Heart left ventricle (tissue), 16 donors: ENCODE measurements at regions of chr22 and their contacts with region 1.

Region 1: GRCh38 chr22:21606775-21607174 is 23.0 kb downstream of the YDJC start:
- DNase-seq: no peak
- ATAC-seq: peak in 1 of 4 donors; percentile 8
- H3K4me3 ChIP-seq: no peak overlapping the region
- H3K27ac ChIP-seq: no peak overlapping the region
- H3K4me1 ChIP-seq: peaks cover 0 to 28% (median 4%) of the 10 kb centered on the region in 12 donors
- H3K27me3 ChIP-seq: no peaks in the 10 kb centered on the region
- CTCF ChIP-seq: no peak
- POLR2A ChIP-seq: no peak

Region 2: GRCh38 chr22:21569459-21570170 is 37.2 kb before region 1 on chr22:
- intact Hi-C with region 1: loop called in 1 of 10 experiments (anchors 5 kb)
- DNase-seq: no peak
- ATAC-seq: no peak
- H3K4me3 ChIP-seq: peak overlapping the region in 7 of 12 donors; percentile 75 to 99 (median 94)
- H3K27ac ChIP-seq: peak overlapping the region in 2 of 12 donors; percentile 59 to 94
- H3K4me1 ChIP-seq: peaks cover 4 to 65% (median 57%) of the 10 kb centered on the region in 12 donors
- H3K27me3 ChIP-seq: no peaks in the 10 kb centered on the region
- CTCF ChIP-seq: no peak
- POLR2A ChIP-seq: no peak

Region 3: DNA sequence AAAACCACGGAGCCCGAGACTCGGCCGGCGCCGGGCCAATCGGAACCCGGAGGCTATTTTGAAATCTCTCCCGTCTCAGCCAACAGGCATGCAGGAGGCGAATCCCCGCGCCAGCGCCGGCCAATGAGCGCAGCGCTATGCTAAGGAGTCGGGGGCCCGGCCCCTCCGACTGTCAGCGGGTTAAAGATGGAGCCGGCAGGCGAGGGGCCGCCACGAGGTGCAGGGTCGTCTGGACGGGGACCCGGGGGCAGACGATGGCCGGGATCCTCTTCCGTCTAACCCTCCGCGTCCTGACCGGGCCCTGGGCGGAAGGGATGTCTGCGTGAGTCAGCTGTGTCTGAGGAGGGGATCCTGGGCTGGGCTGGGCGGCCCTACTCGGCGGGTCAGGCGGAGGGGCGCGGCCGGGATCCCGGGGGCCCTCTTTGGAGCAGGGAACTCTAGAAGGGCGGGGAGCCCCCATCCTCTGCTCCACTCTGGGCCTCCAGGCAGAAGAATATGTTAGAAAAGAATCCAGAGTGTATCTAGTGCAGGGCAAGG is 45.3 kb after region 1 on chr22:
- intact Hi-C with region 1: loop called in 1 of 10 experiments (anchors 5 kb)
- DNase-seq: peak; percentile 87 to 94 (median 89)
- ATAC-seq: peak; percentile 82 to 94 (median 92)
- H3K4me3 ChIP-seq: peak overlapping the region; percentile 37 to 83 (median 60)
- H3K27ac ChIP-seq: peak overlapping the region in 3 of 12 donors; percentile 0 to 42 (median 3)
- H3K4me1 ChIP-seq: peaks cover 0 to 23% (median 18%) of the 10 kb centered on the region in 12 donors
- H3K27me3 ChIP-seq: peaks cover 0 to 5% (median 0%) of the 10 kb centered on the region in 9 donors
- CTCF ChIP-seq: no peak
- POLR2A ChIP-seq: no peak

Region 4: GRCh38 chr22:21707677-21708076 is 100.9 kb after region 1 on chr22:
- intact Hi-C with region 1: no loop called
- DNase-seq: no peak
- ATAC-seq: peak in 3 of 4 donors; percentile 7 to 27 (median 11)
- H3K4me3 ChIP-seq: no peak overlapping the region
- H3K27ac ChIP-seq: no peak overlapping the region
- H3K4me1 ChIP-seq: peaks cover 0 to 15% (median 7%) of the 10 kb centered on the region in 12 donors
- H3K27me3 ChIP-seq: no peaks in the 10 kb centered on the region
- CTCF ChIP-seq: no peak
- POLR2A ChIP-seq: no peak